Activated CD8-positive, alpha-beta T cell treated with anti-CD3 and anti-CD28 coated beads for 36 hours (primary cell): ENCODE measurements at regions of chr17 and their contacts with region 1.

Region 1: GRCh38 chr17:79839363-79840268 is at the start of gene CBX4:
- DNase-seq: peak; percentile 93
- ATAC-seq: peak; percentile 76
- H3K4me3 Mint-ChIP-seq: peak within 1 kb of the TSS; percentile 91
- H3K27ac Mint-ChIP-seq: peak within 1 kb of the TSS; percentile 92
- H3K4me1 Mint-ChIP-seq: peaks cover 46% of the 10 kb centered on the region
- H3K27me3 Mint-ChIP-seq: peaks cover 31% of the 10 kb centered on the region
- CTCF ChIP-seq: peak; percentile 82
- total RNA-seq, gene CBX4: 23.9 to 28.0 TPM

Region 2: GRCh38 chr17:79741751-79742588 is 97.6 kb before region 1 on chr17:
- CTCF ChIA-PET with region 1: interaction called, 7 read pairs
- POLR2A ChIA-PET with region 1: interaction called, 4 read pairs
- intact Hi-C with region 1: loop called (anchors 10 kb)
- DNase-seq: peak; percentile 76
- ATAC-seq: peak; percentile 52
- H3K4me3 Mint-ChIP-seq: no peak overlapping the region
- H3K27ac Mint-ChIP-seq: no peak overlapping the region
- H3K4me1 Mint-ChIP-seq: peaks cover 13% of the 10 kb centered on the region
- H3K27me3 Mint-ChIP-seq: peaks cover 27% of the 10 kb centered on the region
- CTCF ChIP-seq: peak; percentile 98

Region 3: DNA sequence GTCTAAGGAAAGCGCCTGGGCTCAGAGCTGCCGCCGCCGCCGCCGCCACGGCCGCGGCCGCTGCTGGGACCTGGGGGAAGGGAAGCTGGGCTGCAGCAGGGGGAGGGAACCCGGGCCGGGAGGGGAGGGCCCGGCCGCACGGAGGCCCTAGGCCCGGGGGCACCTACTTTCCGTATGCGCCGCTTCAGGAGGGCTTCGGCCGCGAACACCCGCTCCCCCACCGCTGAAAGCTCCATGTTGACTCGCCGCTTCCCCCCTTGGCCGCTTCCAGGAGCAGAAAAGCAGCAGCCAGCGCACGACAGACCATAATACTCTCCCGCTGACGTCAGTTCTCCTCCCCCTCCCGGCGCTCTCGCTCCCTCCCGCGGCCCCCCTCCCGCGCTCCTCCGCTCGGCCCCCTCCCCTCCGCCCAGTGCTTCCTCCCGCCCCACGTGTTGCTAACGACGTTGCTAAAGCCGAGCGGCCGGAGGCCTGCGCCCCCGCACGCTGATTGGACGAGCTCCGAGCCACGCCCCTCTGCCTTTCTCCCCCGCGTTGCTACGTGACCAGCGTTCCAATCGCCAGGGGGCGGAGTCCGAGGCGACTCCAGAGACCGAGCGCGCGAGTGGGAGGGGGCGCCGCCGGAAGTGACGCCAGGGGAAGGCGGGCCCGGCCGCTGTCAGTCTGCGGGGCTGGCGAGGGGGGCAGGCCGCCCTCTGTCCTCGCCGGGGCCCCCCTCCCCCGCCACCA is 42.7 kb before region 1 on chr17 and contains the start of gene CBX8:
- CTCF ChIA-PET with region 1: interaction called, 14 read pairs
- POLR2A ChIA-PET with region 1: interaction called, 15 read pairs
- intact Hi-C with region 1: loop called (anchors 5 kb)
- DNase-seq: peak; percentile 100
- ATAC-seq: peak; percentile 87
- H3K4me3 Mint-ChIP-seq: peak within 1 kb of the TSS; percentile 82
- H3K27ac Mint-ChIP-seq: peak within 1 kb of the TSS; percentile 68
- H3K4me1 Mint-ChIP-seq: peaks cover 31% of the 10 kb centered on the region
- H3K27me3 Mint-ChIP-seq: peaks cover 37% of the 10 kb centered on the region
- CTCF ChIP-seq: no peak
- total RNA-seq, gene CBX8: 7.0 to 9.4 TPM

Region 4: GRCh38 chr17:79810130-79811010 is 29.2 kb before region 1 on chr17:
- CTCF ChIA-PET with region 1: interaction called, 56 read pairs
- POLR2A ChIA-PET with region 1: interaction called, 19 read pairs
- intact Hi-C with region 1: no loop called
- DNase-seq: peak; percentile 88
- ATAC-seq: peak; percentile 87
- H3K4me3 Mint-ChIP-seq: peak overlapping the region; percentile 19
- H3K27ac Mint-ChIP-seq: no peak overlapping the region
- H3K4me1 Mint-ChIP-seq: peaks cover 32% of the 10 kb centered on the region
- H3K27me3 Mint-ChIP-seq: peaks cover 62% of the 10 kb centered on the region
- CTCF ChIP-seq: no peak

Region 5: GRCh38 chr17:79866791-79867518 is 27.3 kb after region 1 on chr17:
- CTCF ChIA-PET with region 1: no interaction called
- POLR2A ChIA-PET with region 1: no interaction called
- intact Hi-C with region 1: no loop called
- DNase-seq: no peak
- ATAC-seq: peak; percentile 61
- H3K4me3 Mint-ChIP-seq: no peak overlapping the region
- H3K27ac Mint-ChIP-seq: no peak overlapping the region
- H3K4me1 Mint-ChIP-seq: no peaks in the 10 kb centered on the region
- H3K27me3 Mint-ChIP-seq: peaks cover 7% of the 10 kb centered on the region
- CTCF ChIP-seq: no peak

Region 6: GRCh38 chr17:79991140-79991923 is 151.7 kb after region 1 on chr17:
- CTCF ChIA-PET with region 1: interaction called, 7 read pairs
- POLR2A ChIA-PET with region 1: interaction called, 12 read pairs
- intact Hi-C with region 1: no loop called
- DNase-seq: peak; percentile 91
- ATAC-seq: peak; percentile 76
- H3K4me3 Mint-ChIP-seq: peak overlapping the region; percentile 80
- H3K27ac Mint-ChIP-seq: no peak overlapping the region
- H3K4me1 Mint-ChIP-seq: peaks cover 36% of the 10 kb centered on the region
- H3K27me3 Mint-ChIP-seq: no peaks in the 10 kb centered on the region
- CTCF ChIP-seq: peak; percentile 49